Heart left ventricle (tissue), 16 donors: ENCODE measurements at regions of chrX and their contacts with region 1.

Region 1: GRCh38 chrX:10608099-10608498 is 12.3 kb downstream of the MID1 start:
- DNase-seq: no peak
- ATAC-seq: no peak
- H3K4me3 ChIP-seq: no peak overlapping the region
- H3K27ac ChIP-seq: no peak overlapping the region
- H3K4me1 ChIP-seq: peaks cover 0 to 12% (median 0%) of the 10 kb centered on the region in 12 donors
- H3K27me3 ChIP-seq: no peaks in the 10 kb centered on the region
- CTCF ChIP-seq: no peak
- POLR2A ChIP-seq: no peak

Region 2: GRCh38 chrX:10507181-10507580 is 100.9 kb before region 1 on chrX:
- intact Hi-C with region 1: loop called in 1 of 10 experiments (anchors 10 kb)
- DNase-seq: no peak
- ATAC-seq: no peak
- H3K4me3 ChIP-seq: no peak overlapping the region
- H3K27ac ChIP-seq: no peak overlapping the region
- H3K4me1 ChIP-seq: peaks cover 0 to 28% (median 2%) of the 10 kb centered on the region in 12 donors
- H3K27me3 ChIP-seq: no peaks in the 10 kb centered on the region
- CTCF ChIP-seq: no peak
- POLR2A ChIP-seq: no peak